ENCODE measurements at regions of chr1 and their contacts with region 1.

Region 1: DNA sequence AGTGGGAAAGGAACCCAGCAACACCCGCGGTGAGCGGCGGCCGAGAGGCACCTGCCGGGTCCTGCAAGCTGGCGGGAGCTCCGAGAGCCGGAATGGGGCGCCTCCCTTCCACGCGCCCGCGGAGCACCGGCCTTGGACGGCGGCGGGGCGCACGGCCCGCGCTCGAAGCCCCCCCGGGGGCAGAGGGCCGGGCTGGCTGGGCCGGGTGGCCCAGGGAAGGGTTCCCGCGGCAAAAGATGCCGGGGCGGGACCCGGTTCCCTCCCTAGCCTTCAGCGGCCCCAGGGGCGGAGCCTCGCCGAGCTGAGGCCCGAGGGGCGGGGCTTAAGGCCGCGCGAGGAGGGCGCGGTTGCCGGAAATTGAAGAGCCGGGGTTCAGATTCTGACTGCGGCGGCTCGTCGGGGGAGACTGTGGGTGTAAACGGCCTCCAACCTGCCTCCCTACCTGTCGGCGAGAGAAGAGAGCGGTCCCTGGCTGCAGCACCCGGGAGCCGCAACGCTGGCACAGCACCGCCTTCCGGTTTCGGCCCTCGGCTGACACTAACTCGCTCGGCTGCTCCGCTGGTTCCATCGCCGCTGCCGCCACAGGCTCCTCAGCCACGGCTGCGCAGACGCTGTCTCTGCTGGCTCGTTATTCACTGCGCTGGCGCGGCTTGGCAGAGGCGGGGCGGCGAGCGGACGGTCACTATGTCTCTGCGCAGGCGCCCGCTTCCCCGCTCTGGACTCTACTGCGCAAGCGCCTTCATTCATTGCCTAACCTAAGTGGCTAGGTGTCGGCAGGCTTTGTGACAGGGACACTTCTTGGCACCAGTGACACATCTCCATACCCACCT is at the start of gene RABIF:
- DNase-seq: peak; percentile 90 to 97
- H3K4me3 ChIP-seq: peak within 1 kb of the TSS; percentile 89
- H3K27ac ChIP-seq: peak within 1 kb of the TSS; percentile 70
- H3K4me1 ChIP-seq: peaks cover 16% of the 10 kb centered on the region
- H3K27me3 ChIP-seq: no peaks in the 10 kb centered on the region
- CTCF ChIP-seq: no peak
- total RNA-seq, gene RABIF: 9.4 and 10.9 TPM in 2 replicates

Region 2: GRCh38 chr1:202283379-202283844 is 605.3 kb before region 1 on chr1:
- CTCF ChIA-PET with region 1: no interaction called
- POLR2A ChIA-PET with region 1: interaction called, 10 read pairs
- intact Hi-C with region 1: no loop called
- DNase-seq: peak; percentile 88 to 91
- H3K4me3 ChIP-seq: no peak overlapping the region
- H3K27ac ChIP-seq: peak overlapping the region; percentile 39; the same call in 1 of the 2 replicates
- H3K4me1 ChIP-seq: peaks cover 39% of the 10 kb centered on the region
- H3K27me3 ChIP-seq: no peaks in the 10 kb centered on the region
- CTCF ChIP-seq: no peak

Region 3: DNA sequence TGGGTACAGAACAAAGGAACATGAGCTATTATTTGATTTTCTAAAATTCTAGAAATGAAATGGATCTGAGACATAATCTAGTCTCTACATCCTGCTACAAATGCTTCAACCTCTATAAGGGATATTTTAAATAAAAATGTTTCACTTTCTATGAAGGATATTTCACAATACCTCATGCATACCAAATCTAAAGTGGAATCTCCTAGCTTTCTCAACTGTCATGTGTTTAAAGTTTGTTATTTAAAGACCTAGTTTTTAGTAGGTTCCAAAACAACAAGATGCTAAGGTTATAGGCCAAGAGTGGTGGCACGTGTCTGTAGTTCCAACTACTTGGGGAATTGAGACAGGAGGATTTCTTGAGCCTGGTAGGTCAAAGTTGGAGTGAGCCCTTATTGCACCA is 128.2 kb before region 1 on chr1:
- CTCF ChIA-PET with region 1: no interaction called
- POLR2A ChIA-PET with region 1: no interaction called
- intact Hi-C with region 1: no loop called
- DNase-seq: no peak
- H3K4me3 ChIP-seq: no peak overlapping the region
- H3K27ac ChIP-seq: no peak overlapping the region
- H3K4me1 ChIP-seq: no peaks in the 10 kb centered on the region
- H3K27me3 ChIP-seq: no peaks in the 10 kb centered on the region
- CTCF ChIP-seq: no peak

Region 4: DNA sequence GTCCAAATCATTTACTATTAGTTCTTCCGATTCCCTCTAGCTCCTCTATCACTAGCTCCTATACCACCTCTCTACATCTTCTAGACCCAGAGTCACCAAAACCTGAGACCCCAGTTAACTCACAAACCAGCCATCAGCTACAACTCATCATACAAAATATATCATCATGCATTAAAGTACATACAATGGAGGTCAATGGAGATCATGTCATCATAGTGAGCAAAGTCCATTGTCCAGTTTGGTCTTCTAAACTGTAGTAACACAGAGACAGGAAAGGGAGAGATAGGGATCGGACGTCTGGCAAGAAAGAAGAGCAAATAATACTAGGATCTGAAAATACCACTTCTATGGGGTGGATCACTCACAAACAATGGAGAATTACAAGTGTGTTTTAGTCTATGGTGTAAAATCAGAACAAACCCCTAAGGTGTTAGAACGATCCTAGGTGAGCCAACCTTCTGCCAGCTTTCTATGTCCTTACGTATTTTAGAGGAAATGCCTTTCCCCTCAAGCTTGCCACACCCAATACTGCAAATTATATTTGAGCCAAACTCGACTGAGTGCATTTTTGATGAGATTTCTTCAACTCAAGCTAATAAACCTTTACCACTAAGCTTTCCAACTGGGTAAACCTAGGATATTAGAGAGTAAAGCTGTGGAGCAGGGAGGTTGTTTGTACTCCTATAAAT is 65.5 kb after region 1 on chr1:
- CTCF ChIA-PET with region 1: no interaction called
- POLR2A ChIA-PET with region 1: interaction called, 12 read pairs
- intact Hi-C with region 1: no loop called
- DNase-seq: no peak
- H3K4me3 ChIP-seq: no peak overlapping the region
- H3K27ac ChIP-seq: no peak overlapping the region
- H3K4me1 ChIP-seq: peaks cover 21% of the 10 kb centered on the region
- H3K27me3 ChIP-seq: no peaks in the 10 kb centered on the region
- CTCF ChIP-seq: no peak

Measured in PC-9 (cell line).